RWPE1 (cell line): ENCODE measurements at regions of chr15 and their contacts with region 1.

Region 1: DNA sequence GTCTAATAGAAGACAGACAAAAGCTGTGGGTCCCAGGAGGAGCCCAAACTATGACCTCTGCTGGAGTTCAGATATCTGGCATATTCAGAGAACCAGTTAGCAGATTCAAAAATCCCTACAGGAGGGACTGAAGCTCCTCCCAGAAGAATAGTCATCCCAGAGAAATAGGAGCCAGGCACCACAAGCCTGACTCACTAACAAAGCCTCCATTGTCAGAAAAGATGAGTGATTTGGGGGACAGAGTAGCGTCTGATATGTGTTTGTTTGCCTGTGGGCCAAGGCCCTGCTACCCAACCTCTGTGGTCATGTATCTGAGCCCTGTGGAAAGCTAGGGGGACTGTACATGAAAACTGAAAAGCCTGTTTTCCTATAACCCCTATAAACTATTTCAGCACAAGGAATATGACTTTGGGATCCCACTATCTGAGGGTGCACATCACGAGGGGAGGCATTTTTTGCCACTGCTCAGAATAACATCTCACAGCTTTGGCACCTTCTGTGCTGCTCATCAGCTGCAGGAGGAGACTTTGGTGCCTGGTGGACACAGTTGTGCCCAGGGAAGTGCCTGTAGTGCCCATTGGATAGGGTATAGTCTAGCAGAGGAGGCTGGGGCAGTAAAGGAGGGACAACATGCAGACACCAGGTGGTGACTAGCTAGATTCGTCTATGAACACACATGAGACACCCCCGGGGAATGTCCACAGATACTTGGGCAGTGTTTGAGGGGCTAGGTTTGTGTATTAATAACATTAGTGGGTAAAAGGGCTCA is 9.7 kb upstream of the LARP6 start:
- DNase-seq: peak; percentile 88
- H3K27ac ChIP-seq: peak overlapping the region; percentile 45
- CTCF ChIP-seq: no peak

Region 2: DNA sequence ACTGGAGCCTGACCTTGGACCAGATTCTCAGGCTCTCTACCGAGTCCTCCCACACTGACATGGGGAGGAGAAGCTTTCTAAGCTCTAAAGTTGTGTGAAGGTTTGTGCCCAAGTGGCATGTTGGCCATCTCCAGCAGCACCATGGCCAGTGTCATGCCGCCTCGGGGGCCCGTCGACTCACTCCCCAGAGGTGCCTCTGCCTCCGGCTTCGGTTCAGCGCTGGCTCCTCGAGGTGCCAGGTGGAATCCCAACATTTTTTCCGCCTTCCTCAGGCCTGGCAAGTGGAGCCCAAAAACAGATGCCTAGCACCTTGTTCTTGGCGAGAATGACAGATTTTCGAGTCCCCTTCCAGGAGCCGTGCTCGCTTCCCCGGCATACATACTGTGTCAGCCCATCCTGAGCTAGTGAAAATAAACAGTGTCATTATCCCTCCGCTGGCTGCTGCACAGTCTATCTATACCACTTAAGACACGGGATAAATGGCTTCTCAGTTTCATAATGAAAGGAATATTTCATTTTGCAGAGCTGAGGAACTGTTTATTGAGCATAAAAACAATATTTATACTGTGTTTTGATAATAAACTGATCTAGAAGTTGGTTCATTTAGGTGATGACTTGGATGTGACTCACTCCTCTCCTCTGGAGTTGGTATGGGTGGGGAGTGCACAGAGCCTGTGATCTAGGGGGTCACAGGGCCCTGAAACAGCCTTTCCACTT is 437.4 kb before region 1 on chr15:
- CTCF ChIA-PET with region 1: no interaction called
- POLR2A ChIA-PET with region 1: no interaction called
- DNase-seq: peak; percentile 57
- H3K27ac ChIP-seq: no peak overlapping the region
- CTCF ChIP-seq: no peak

Region 3: DNA sequence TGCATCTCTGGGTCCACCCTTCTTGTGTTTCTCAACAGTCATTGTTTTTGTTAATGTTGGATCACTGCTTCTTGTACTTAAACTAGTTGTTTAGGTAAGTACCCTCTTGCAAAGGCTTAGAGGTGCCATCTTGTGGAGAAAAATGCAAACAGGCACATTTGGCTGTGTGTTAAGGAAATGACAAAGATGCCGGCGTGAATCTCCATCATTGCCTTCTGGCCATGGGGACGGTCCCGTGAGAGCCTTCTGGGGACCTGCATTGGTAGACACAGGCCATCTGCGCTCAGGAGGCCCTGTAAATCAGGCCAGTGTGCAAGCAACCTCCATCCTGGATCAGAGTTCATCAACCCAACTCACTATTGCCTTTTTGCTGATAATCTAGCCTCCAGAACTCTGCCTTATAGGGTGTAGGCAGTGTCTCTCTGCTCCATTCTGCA is 788.1 kb after region 1 on chr15:
- CTCF ChIA-PET with region 1: interaction called, 10 read pairs
- POLR2A ChIA-PET with region 1: no interaction called
- DNase-seq: peak; percentile 62
- H3K27ac ChIP-seq: no peak overlapping the region
- CTCF ChIP-seq: peak; percentile 90